PC-9 (cell line): ENCODE measurements at regions of chr6 and their contacts with region 1.

Region 1: GRCh38 chr6:84379142-84379541 is 151.7 kb upstream of the CEP162 start:
- DNase-seq: no peak
- H3K4me3 ChIP-seq: no peak overlapping the region
- H3K27ac ChIP-seq: no peak overlapping the region
- H3K4me1 ChIP-seq: no peaks in the 10 kb centered on the region
- H3K27me3 ChIP-seq: no peaks in the 10 kb centered on the region
- CTCF ChIP-seq: no peak

Region 2: DNA sequence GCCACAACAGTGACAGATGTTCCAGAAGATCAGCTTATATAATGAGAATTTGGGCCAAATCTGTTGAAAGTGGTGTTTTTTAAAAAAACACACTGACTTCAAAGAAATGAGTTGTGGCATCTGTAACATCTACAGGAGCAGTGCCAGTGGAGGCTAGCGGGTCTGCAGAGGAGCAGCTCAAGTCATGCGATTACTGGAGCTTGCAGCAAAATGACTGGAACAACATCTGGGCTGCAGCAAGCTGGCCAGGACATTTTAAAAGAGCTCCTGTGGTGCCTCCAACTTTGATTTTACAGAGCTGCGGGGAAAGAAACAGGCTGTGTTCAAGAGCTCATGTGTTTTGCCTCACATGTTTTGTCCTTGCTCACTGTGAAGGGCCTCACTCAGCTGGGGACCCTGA is 328.0 kb after region 1 on chr6:
- CTCF ChIA-PET with region 1: no interaction called
- POLR2A ChIA-PET with region 1: interaction called, 17 read pairs
- intact Hi-C with region 1: no loop called
- DNase-seq: no peak
- H3K4me3 ChIP-seq: no peak overlapping the region
- H3K27ac ChIP-seq: no peak overlapping the region
- H3K4me1 ChIP-seq: no peaks in the 10 kb centered on the region
- H3K27me3 ChIP-seq: no peaks in the 10 kb centered on the region
- CTCF ChIP-seq: no peak

Region 3: DNA sequence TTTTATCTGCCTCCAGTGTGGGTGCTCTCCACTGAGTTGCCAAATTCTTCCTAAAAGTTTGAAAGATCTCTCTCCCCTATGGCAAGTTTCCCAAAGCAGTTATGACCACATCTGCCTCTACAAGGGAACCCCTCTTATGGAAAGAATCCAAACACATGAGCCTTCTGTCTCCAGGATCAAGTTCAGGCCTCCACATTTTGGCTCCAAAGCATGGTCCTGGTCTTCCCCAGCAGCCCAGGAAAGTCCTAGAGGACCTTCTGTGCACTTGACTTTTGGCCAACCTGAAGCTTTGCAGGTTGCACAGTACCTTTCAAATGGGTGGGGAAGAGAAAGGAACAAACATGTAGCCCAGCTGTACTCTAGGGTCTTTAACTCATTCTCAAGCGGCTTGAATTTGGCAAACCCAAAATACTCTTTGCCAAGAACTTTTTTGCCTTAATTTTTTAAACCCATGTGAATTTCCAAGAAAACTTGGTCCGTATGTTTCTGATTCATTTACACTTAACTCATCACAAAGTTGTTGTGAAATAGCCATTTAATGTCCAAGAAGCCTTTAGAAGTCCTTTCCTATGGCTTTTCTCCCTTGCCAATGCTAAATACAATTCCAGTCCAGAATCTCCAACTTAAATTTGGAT is 625.3 kb after region 1 on chr6:
- CTCF ChIA-PET with region 1: no interaction called
- POLR2A ChIA-PET with region 1: no interaction called
- intact Hi-C with region 1: no loop called
- DNase-seq: no peak
- H3K4me3 ChIP-seq: no peak overlapping the region
- H3K27ac ChIP-seq: no peak overlapping the region
- H3K4me1 ChIP-seq: no peaks in the 10 kb centered on the region
- H3K27me3 ChIP-seq: no peaks in the 10 kb centered on the region
- CTCF ChIP-seq: no peak